ENCODE measurements at regions of chr3 and their contacts with region 1.

Region 1: GRCh38 chr3:71495708-71496472 is 87.6 kb downstream of the FOXP1 start:
- DNase-seq: no peak
- ATAC-seq: peak; percentile 59 to 76 (median 66)
- H3K4me3 ChIP-seq: no peak overlapping the region
- H3K27ac ChIP-seq: no peak overlapping the region
- H3K4me1 ChIP-seq: peaks cover 38% of the 10 kb centered on the region
- H3K27me3 ChIP-seq: no peaks in the 10 kb centered on the region
- CTCF ChIP-seq: no peak

Region 2: DNA sequence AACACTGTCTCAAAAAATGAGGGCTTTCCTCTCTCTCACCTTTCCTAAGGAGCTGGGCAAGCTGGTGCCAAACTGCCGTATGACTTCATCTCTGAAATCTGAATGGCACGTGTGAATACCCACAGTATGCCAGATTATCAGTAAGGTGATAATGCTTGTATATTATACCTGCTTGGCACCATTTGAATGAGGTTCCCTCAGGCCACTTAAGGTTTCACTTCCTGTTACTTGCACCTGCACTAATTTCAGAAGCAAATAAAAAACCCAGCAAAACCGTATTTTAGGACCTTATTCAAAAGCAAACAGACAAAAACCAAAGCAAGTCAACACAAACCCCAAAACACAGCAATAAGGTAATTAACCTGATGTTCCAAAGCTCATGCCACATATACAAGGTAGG is 67.9 kb after region 1 on chr3:
- intact Hi-C with region 1: loop called in 1 of 2 experiments (anchors 5 kb)
- DNase-seq: no peak
- ATAC-seq: no peak
- H3K4me3 ChIP-seq: no peak overlapping the region
- H3K27ac ChIP-seq: peak overlapping the region; percentile 28
- H3K4me1 ChIP-seq: peaks cover 12% of the 10 kb centered on the region
- H3K27me3 ChIP-seq: no peaks in the 10 kb centered on the region
- CTCF ChIP-seq: no peak

Measured in psoas muscle (tissue), 8 donors.